Sigmoid colon (tissue), 7 donors: ENCODE measurements at regions of chr10 and their contacts with region 1.

Region 1: GRCh38 chr10:86965986-86966654 is 2.2 kb upstream of the ADIRF start:
- DNase-seq: peak; percentile 53
- H3K4me3 ChIP-seq: no peak overlapping the region
- H3K27ac ChIP-seq: peak overlapping the region; percentile 94 to 98 (median 96)
- H3K4me1 ChIP-seq: peaks cover 0 to 47% (median 45%) of the 10 kb centered on the region in 4 donors
- H3K27me3 ChIP-seq: no peaks in the 10 kb centered on the region
- CTCF ChIP-seq: no peak
- EP300 ChIP-seq: no peak
- POLR2A ChIP-seq: no peak

Region 2: GRCh38 chr10:86688398-86688921 is 277.7 kb before region 1 on chr10:
- intact Hi-C with region 1: loop called (anchors 1 kb)
- DNase-seq: peak; percentile 85
- H3K4me3 ChIP-seq: no peak overlapping the region
- H3K27ac ChIP-seq: peak overlapping the region; percentile 68 to 95 (median 92)
- H3K4me1 ChIP-seq: peaks cover 0 to 99% (median 81%) of the 10 kb centered on the region in 4 donors
- H3K27me3 ChIP-seq: no peaks in the 10 kb centered on the region
- CTCF ChIP-seq: peak; percentile 60 to 90 (median 76)
- EP300 ChIP-seq: no peak
- POLR2A ChIP-seq: no peak